ENCODE measurements at regions of chr12 and their contacts with region 1.

Region 1: DNA sequence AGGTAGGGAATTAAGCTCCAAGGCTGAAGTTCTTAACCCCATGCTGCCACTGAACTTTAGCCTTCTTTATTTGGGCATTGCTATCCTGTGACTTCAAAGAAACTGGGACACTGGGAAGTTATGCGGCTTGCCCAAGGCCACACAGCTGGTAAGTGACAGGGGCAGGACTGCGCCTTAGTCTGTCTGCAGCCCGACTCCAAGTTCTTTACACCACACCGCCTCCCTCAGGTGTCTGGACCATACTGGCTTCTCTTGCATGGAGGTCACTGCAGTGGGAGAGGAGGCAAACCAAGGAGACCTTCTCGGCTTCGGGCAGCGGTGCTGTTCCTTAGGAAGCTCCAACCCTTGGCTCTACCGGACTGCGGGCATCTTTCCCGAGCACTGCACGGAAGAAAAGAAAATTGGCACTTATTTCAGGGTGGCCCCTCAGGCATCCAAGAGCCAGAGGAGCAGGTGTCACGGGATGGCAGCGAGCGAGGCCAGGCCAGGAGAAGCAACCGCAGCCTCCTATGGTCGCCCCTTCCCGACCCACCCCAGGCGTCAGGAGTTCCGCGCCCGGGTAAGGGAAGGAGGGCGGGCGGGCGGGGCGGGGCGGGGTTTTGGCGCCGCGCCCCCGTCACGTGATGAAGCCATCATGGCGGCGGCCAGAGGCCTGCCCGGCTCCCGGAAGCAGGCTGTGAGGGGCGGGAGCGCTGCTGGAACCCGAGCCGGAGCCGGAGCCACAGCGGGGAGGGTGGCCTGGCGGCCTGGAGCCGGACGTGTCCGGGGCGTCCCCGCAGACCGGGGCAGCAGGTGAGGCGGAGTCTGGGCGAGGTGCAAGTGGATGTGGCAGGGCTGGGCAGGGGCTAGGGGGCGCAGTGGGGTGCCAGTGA is 16.4 kb upstream of the ESPL1 start:
- DNase-seq: peak in 1 of 2 donors; percentile 94
- H3K4me3 ChIP-seq: peak overlapping the region; percentile 85 to 89
- H3K27ac ChIP-seq: peak overlapping the region; percentile 91
- H3K4me1 ChIP-seq: peaks cover 31% of the 10 kb centered on the region
- H3K27me3 ChIP-seq: no peaks in the 10 kb centered on the region
- CTCF ChIP-seq: peak in 2 of 3 experiments; percentile 12 to 43
- POLR2A ChIP-seq: peak in 1 of 2 donors; percentile 62

Region 2: GRCh38 chr12:53200458-53201176 is 51.1 kb before region 1 on chr12:
- intact Hi-C with region 1: loop called (anchors 2 kb)
- DNase-seq: no peak
- H3K4me3 ChIP-seq: no peak overlapping the region
- H3K27ac ChIP-seq: no peak overlapping the region
- H3K4me1 ChIP-seq: peaks cover 13% of the 10 kb centered on the region
- H3K27me3 ChIP-seq: no peaks in the 10 kb centered on the region
- CTCF ChIP-seq: no peak
- POLR2A ChIP-seq: no peak

Region 3: DNA sequence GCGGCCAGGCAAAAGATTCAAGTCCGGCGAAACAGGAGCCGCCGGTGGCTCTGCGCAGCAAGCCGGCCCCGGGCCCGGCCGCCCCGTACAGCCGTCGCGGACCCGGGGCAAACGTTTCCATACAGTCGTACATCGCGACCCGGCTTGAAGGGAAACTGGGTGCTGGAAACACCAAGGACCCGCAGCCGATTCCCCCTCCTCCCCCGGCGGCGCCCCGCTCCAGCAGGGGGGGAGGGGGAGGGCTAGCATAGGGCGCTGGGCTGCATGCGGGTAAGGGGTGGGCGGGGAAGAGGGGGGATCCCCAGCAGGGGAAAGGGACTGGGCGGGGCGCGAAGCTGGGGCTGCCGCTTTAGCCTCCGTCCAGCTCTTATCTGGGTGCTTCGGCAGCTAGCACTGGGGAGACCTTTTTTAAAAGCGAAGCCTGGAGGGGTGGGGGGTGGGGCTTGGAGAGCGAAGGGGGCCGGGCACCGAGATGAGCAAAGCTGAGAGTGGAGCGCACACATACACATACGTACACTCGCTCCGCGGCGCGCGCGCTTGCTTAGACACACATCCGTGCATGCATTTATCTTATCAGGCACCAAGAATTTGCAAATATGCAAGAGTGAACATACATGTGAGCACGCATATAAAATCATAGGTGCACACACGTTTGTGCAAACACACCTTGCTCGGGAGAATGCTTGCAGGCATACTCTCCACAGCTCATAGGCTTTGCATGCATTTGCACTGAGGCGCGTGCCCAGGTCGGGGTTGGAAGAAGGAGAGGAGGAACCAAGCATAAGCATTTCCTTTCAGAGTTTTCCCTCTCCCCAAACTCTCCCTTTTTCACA is 31.5 kb before region 1 on chr12:
- intact Hi-C with region 1: loop called (anchors 5 kb)
- DNase-seq: no peak
- H3K4me3 ChIP-seq: peak overlapping the region; percentile 75 to 91
- H3K27ac ChIP-seq: peak overlapping the region; percentile 99
- H3K4me1 ChIP-seq: peaks cover 74% of the 10 kb centered on the region
- H3K27me3 ChIP-seq: no peaks in the 10 kb centered on the region
- CTCF ChIP-seq: no peak
- POLR2A ChIP-seq: no peak

Measured in vagina (tissue), 2 donors.